Transverse colon (tissue), 4 donors: ENCODE measurements at regions of chr9 and their contacts with region 1.

Region 1: DNA sequence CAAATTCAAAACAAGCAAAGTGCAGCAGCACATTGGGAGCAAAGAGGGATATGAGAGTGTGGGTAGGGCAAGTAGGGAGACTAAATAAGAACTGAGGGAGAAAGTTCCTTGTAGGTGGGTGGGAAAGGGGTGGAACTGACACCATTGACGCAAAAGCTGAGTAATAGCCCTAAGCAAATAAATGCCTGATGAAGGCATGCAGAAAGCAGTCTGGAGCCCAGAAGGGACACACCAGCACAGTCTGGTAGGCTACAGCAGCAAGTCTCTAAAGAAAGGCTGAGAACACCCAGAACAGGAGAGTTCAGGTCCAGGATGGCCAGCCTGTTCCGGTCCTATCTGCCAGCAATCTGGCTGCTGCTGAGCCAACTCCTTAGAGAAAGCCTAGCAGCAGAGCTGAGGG is at the start of gene INSL4:
- DNase-seq: no peak
- H3K4me3 ChIP-seq: no peak within 1 kb of the TSS
- H3K27ac ChIP-seq: no peak within 1 kb of the TSS
- H3K4me1 ChIP-seq: no peaks in the 10 kb centered on the region
- H3K27me3 ChIP-seq: no peaks in the 10 kb centered on the region
- CTCF ChIP-seq: no peak
- EP300 ChIP-seq: no peak
- POLR2A ChIP-seq: no peak
- total RNA-seq, gene INSL4: not detected

Region 2: DNA sequence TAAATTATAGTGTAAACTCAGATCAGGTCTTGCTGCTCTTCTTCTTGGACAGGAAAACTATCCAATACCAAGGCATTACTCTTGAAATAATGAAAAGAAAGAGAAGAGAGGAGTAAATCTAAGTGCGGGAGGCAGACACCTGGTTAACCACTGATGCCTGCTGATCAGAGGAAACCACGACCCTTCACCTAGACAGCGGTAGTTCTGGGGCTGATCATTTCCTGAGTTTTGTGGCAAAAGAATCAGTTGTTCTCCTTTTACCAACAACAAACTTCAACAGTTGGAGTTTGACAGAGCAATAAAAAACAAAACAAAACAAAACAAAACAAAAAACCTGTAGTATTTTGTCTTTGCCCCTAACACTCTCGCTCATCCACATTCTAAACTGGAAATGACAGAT is 105.5 kb after region 1 on chr9:
- in situ Hi-C with region 1: no loop called
- intact Hi-C with region 1: no loop called
- DNase-seq: no peak
- H3K4me3 ChIP-seq: no peak overlapping the region
- H3K27ac ChIP-seq: no peak overlapping the region
- H3K4me1 ChIP-seq: no peaks in the 10 kb centered on the region
- H3K27me3 ChIP-seq: no peaks in the 10 kb centered on the region
- CTCF ChIP-seq: no peak
- EP300 ChIP-seq: no peak
- POLR2A ChIP-seq: no peak

Region 3: DNA sequence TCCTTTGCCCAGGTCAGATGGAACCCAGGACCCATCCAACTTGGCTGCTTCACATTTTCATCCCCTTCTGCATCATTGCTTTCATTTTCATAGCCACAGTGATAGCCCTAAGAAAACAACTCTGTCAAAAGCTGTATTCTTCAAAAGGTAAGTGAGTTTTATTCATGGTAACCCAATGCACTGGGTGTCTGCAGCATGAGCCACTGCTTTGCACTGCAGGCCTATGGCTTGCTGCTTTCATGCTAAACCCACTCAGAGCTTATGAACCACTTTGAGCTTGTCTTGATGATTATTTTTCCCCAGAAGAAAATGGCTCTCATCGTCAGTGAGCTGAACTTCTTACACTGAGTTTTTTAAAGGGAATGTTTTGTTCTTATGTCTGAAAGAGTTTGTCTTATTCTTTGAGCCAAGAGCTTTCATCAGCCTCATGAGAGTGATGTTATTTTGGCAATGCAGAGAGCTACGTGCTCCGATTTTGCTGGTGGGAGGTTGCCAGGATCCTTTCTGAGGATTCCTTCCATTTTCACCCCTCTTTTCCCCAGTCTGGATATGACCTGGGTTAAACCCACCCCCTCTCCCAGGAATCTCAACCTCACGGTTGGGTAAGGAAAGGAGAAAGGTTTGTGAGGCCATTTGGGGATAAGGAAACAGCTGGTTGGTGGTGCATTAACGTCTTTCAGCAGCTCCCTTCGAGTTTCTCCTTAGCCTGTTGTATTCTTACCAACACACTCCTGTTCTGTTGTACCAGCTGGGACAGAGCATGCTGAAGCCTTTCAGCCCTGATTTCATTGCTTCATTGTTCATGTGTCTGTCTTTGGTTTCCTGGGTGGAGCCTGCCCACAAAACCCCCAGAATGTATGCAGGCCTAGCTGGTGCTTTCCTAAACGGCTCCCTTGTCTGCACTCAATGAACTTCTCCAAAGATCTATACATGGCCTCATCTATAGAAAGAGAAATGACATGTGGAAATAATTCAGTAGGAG is 326.7 kb after region 1 on chr9:
- in situ Hi-C with region 1: no loop called
- intact Hi-C with region 1: loop called (anchors 10 kb)
- DNase-seq: peak; percentile 11
- H3K4me3 ChIP-seq: no peak overlapping the region
- H3K27ac ChIP-seq: no peak overlapping the region
- H3K4me1 ChIP-seq: peaks cover 0 to 7% (median 3%) of the 10 kb centered on the region in 4 donors
- H3K27me3 ChIP-seq: no peaks in the 10 kb centered on the region
- CTCF ChIP-seq: no peak
- EP300 ChIP-seq: no peak
- POLR2A ChIP-seq: no peak

Region 4: GRCh38 chr9:5749306-5749705 is 518.1 kb after region 1 on chr9:
- in situ Hi-C with region 1: no loop called
- intact Hi-C with region 1: no loop called
- DNase-seq: no peak
- H3K4me3 ChIP-seq: no peak overlapping the region
- H3K27ac ChIP-seq: no peak overlapping the region
- H3K4me1 ChIP-seq: no peaks in the 10 kb centered on the region
- H3K27me3 ChIP-seq: no peaks in the 10 kb centered on the region
- CTCF ChIP-seq: no peak
- EP300 ChIP-seq: no peak
- POLR2A ChIP-seq: no peak